ENCODE measurements at regions of chr14 and their contacts with region 1.

Region 1: DNA sequence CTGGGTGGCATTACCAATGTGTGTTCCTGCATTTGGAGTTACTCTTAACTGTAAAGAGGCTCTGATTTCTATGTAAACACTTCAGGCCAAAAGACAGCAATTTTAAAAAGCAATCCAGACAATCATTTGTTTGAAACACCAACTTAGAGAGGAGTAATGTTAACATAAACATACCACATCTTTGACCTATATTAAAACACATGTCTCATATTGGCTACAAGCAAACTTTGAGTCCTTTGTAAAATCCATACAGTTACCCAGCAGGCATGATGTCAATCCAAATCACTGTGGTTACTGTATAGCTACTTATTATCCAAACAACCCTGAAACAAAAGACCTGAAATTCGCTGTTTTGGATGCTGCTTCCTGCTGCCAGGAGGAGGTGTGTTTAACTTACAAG is 7.5 kb upstream of the G2E3 start:
- DNase-seq: peak; percentile 31
- ATAC-seq: peak; percentile 60
- H3K4me3 ChIP-seq: no peak overlapping the region
- H3K27ac ChIP-seq: no peak overlapping the region
- H3K4me1 ChIP-seq: peaks cover 20% of the 10 kb centered on the region
- H3K27me3 ChIP-seq: peaks cover 0 to 14% of the 10 kb centered on the region in 2 experiments; a peak in 1 of 5 replicates
- CTCF ChIP-seq: no peak
- EP300 ChIP-seq: no peak
- POLR2A ChIP-seq: no peak
- RAD21 ChIP-seq: no peak

Region 2: DNA sequence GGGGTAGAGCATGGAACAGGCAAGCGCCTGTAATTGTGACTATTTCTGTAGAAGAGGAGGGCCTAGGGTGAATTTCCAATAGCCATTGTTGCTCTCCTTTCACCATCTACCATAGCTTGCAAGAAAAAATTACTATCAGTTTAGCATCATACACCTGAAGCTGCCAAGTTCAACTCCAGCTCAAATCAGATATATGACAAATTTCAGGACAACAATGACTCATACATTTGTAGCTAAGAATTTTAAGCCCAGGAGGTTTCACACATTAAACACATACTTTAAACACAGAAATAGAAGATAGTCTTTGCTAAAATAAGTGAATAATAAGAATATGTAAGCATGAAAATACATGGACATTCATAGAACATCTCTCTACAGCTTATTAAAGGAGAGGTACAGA is 10.1 kb before region 1 on chr14:
- CTCF ChIA-PET with region 1: no interaction called
- POLR2A ChIA-PET with region 1: no interaction called
- in situ Hi-C with region 1: no loop called
- intact Hi-C with region 1: loop called (anchors 1 kb)
- DNase-seq: no peak
- ATAC-seq: no peak
- H3K4me3 ChIP-seq: no peak overlapping the region
- H3K27ac ChIP-seq: no peak overlapping the region
- H3K4me1 ChIP-seq: no peaks in the 10 kb centered on the region
- H3K27me3 ChIP-seq: no peaks in the 10 kb centered on the region
- CTCF ChIP-seq: no peak
- EP300 ChIP-seq: no peak
- POLR2A ChIP-seq: no peak
- RAD21 ChIP-seq: no peak

Region 3: DNA sequence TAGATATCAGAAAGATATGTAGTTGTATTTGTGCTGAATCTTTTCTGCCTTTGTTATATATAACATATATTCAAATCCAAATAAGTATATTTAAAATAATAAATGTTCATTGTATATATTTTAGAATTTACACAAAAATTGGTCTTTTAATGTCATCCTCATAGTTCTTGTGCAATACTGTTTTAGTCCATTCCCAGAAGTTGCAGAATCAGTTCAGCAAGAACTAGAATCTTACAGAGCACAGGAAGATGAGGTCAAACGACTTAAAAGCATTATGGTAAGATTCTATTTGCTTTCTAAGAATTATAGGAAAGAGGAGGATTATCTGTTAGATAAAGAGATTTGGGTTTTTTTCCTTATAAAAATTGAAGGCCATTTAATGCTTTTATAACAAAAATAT is 121.6 kb after region 1 on chr14:
- CTCF ChIA-PET with region 1: no interaction called
- POLR2A ChIA-PET with region 1: no interaction called
- in situ Hi-C with region 1: no loop called
- intact Hi-C with region 1: no loop called
- DNase-seq: no peak
- ATAC-seq: no peak
- H3K4me3 ChIP-seq: no peak overlapping the region
- H3K27ac ChIP-seq: no peak overlapping the region
- H3K4me1 ChIP-seq: no peaks in the 10 kb centered on the region
- H3K27me3 ChIP-seq: no peaks in the 10 kb centered on the region
- CTCF ChIP-seq: no peak
- EP300 ChIP-seq: no peak
- POLR2A ChIP-seq: no peak
- RAD21 ChIP-seq: no peak